CD4-positive, alpha-beta T cell (primary cell): ENCODE measurements at regions of chr6 and their contacts with region 1.

Region 1: GRCh38 chr6:29964887-29965562 is 22.7 kb downstream of the HLA-A start:
- DNase-seq: peak; percentile 53 to 94 (median 75)
- ATAC-seq: peak; percentile 91
- H3K4me3 ChIP-seq: peak overlapping the region; percentile 56
- H3K4me3 Mint-ChIP-seq: peak overlapping the region; percentile 77
- H3K27ac ChIP-seq: peak overlapping the region; percentile 38 to 74
- H3K27ac Mint-ChIP-seq: peak overlapping the region; percentile 82
- H3K4me1 ChIP-seq: peaks cover 39% of the 10 kb centered on the region
- H3K4me1 Mint-ChIP-seq: peaks cover 39% of the 10 kb centered on the region
- H3K27me3 ChIP-seq: no peaks in the 10 kb centered on the region
- H3K27me3 Mint-ChIP-seq: no peaks in the 10 kb centered on the region
- CTCF ChIP-seq: no peak

Region 2: GRCh38 chr6:29705389-29706231 is 259.4 kb before region 1 on chr6:
- CTCF ChIA-PET with region 1: no interaction called
- POLR2A ChIA-PET with region 1: interaction called, 14 read pairs
- intact Hi-C with region 1: loop called in 1 of 2 experiments (anchors 5 kb)
- DNase-seq: peak in 4 of 14 experiments; percentile 29 to 70 (median 56)
- ATAC-seq: no peak
- H3K4me3 ChIP-seq: no peak overlapping the region
- H3K4me3 Mint-ChIP-seq: peak overlapping the region; percentile 63
- H3K27ac ChIP-seq: no peak overlapping the region
- H3K27ac Mint-ChIP-seq: peak overlapping the region; percentile 83
- H3K4me1 ChIP-seq: peaks cover 49% of the 10 kb centered on the region
- H3K4me1 Mint-ChIP-seq: peaks cover 57% of the 10 kb centered on the region
- H3K27me3 ChIP-seq: peaks cover 2 to 7% of the 10 kb centered on the region in 2 experiments
- H3K27me3 Mint-ChIP-seq: peaks cover 29% of the 10 kb centered on the region
- CTCF ChIP-seq: peak; percentile 90

Region 3: DNA sequence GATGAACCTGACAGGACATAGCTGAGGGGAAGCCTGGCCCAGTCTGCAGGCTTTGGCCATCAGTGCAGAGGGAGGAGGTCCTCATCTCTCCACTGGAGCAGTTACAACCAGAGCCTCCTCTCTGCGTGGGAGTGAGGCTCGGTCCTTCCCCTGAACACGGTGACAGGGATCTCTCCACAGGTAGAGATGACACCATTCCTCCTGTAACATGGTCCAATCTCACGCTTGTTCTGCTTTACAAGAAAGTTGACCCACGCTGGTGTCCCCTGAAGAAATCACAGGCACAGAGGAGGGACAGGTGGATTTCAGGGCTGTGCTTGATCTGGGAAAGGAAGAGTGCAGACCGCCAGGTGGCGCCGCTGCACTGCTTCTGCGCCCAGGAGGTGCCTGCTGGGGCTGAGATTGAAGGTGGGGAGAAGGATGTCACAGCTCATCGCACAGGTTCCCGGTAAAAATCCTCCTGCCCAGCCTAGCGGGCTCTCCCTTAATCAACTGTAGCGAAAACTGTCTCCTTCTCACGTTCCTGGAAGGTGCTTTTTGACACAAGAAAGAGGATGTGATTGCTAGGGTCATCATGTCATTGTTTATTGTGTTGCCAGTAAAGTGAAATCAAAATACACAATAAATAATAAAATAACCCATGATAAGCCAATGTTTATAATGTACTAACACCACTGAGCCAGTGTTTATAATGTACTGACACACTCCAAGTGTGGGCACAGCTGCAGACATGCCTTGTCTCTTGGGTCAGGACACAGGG is 117.0 kb before region 1 on chr6:
- CTCF ChIA-PET with region 1: interaction called, 28 read pairs
- POLR2A ChIA-PET with region 1: interaction called, 9 read pairs
- intact Hi-C with region 1: loop called (anchors 1 kb)
- DNase-seq: peak; percentile 75 to 92 (median 84)
- ATAC-seq: peak; percentile 89
- H3K4me3 ChIP-seq: no peak overlapping the region
- H3K4me3 Mint-ChIP-seq: no peak overlapping the region
- H3K27ac ChIP-seq: no peak overlapping the region
- H3K27ac Mint-ChIP-seq: no peak overlapping the region
- H3K4me1 ChIP-seq: peaks cover 15% of the 10 kb centered on the region
- H3K4me1 Mint-ChIP-seq: peaks cover 14% of the 10 kb centered on the region
- H3K27me3 ChIP-seq: peaks cover 29 to 54% of the 10 kb centered on the region in 2 experiments
- H3K27me3 Mint-ChIP-seq: peaks cover 72% of the 10 kb centered on the region
- CTCF ChIP-seq: peak; percentile 97

Region 4: DNA sequence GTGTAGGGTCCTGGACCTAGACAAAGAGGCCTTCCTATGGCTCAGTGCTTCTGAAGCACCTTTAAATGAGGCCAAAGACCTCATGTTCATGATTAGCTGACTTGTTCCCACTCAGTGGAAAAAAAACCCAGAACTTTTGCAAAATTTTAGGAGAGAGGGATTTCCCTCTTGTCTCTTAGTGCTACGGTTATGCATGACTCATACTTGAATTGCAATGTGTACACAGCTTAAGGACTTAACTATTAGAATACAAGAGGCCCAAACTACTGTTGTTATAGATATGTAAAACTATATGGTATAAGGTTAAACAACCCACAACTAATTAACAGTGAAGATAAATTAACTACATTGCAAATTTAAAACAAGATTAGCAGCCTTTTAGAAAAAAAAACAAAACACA is 55.0 kb before region 1 on chr6:
- CTCF ChIA-PET with region 1: no interaction called
- POLR2A ChIA-PET with region 1: no interaction called
- intact Hi-C with region 1: no loop called
- DNase-seq: no peak
- ATAC-seq: no peak
- H3K4me3 ChIP-seq: no peak overlapping the region
- H3K4me3 Mint-ChIP-seq: no peak overlapping the region
- H3K27ac ChIP-seq: no peak overlapping the region
- H3K27ac Mint-ChIP-seq: no peak overlapping the region
- H3K4me1 ChIP-seq: peaks cover 4% of the 10 kb centered on the region
- H3K4me1 Mint-ChIP-seq: no peaks in the 10 kb centered on the region
- H3K27me3 ChIP-seq: no peaks in the 10 kb centered on the region
- H3K27me3 Mint-ChIP-seq: peaks cover 29% of the 10 kb centered on the region
- CTCF ChIP-seq: no peak

Region 5: DNA sequence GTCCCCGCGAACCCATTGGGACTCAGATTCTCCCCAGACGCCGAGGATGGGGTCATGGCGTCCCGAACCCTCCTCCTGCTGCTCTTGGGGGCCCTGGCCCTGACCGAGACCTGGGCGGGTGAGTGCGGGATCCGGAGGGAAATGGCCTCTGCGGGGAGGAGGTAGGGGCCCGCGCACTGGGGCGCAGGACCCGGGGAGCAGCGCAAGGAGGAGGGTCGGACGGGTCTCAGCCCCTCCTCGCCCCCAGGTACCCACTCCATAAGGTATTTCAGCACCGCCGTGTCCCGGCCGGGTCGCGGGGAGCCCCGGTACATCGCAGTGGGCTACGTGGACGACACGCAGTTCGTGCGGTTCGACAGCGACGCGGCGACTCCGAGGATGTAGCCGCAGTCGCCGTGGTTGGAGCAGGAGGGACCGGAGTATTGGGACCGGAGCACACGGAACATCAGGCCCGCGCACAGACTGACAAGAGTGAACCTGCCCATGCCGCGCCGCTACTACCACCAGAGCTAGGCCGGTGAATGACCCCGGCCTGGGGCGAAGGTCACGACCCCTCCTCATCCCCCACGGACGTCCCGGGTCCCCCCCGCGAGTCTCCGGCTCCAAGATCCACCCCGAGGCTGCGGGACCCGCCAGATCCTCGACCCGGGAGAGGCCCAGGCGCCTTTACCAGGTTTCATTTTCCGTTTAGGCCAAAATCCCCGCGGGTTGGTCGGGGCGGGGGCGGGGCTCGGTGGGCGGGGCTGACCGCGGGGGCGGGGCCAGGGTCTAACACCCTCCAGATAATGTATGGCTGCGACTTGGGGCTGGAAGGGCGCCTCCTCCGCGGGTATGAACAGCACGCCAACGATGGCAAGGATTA is 38.4 kb before region 1 on chr6:
- CTCF ChIA-PET with region 1: interaction called, 5 read pairs
- POLR2A ChIA-PET with region 1: interaction called, 22 read pairs
- intact Hi-C with region 1: loop called (anchors 5 kb)
- DNase-seq: peak; percentile 59 to 96 (median 85)
- ATAC-seq: peak; percentile 93
- H3K4me3 ChIP-seq: peak overlapping the region; percentile 97
- H3K4me3 Mint-ChIP-seq: peak overlapping the region; percentile 98
- H3K27ac ChIP-seq: peak overlapping the region; percentile 93 to 99
- H3K27ac Mint-ChIP-seq: peak overlapping the region; percentile 92
- H3K4me1 ChIP-seq: peaks cover 24% of the 10 kb centered on the region
- H3K4me1 Mint-ChIP-seq: peaks cover 26% of the 10 kb centered on the region
- H3K27me3 ChIP-seq: no peaks in the 10 kb centered on the region
- H3K27me3 Mint-ChIP-seq: no peaks in the 10 kb centered on the region
- CTCF ChIP-seq: no peak

Region 6: GRCh38 chr6:29953001-29953441 is 12.0 kb before region 1 on chr6:
- CTCF ChIA-PET with region 1: interaction called, 5 read pairs
- POLR2A ChIA-PET with region 1: interaction called, 141 read pairs
- intact Hi-C with region 1: no loop called
- DNase-seq: no peak
- ATAC-seq: no peak
- H3K4me3 ChIP-seq: no peak overlapping the region
- H3K4me3 Mint-ChIP-seq: no peak overlapping the region
- H3K27ac ChIP-seq: no peak overlapping the region
- H3K27ac Mint-ChIP-seq: no peak overlapping the region
- H3K4me1 ChIP-seq: peaks cover 19% of the 10 kb centered on the region
- H3K4me1 Mint-ChIP-seq: peaks cover 44% of the 10 kb centered on the region
- H3K27me3 ChIP-seq: no peaks in the 10 kb centered on the region
- H3K27me3 Mint-ChIP-seq: no peaks in the 10 kb centered on the region
- CTCF ChIP-seq: no peak